ENCODE measurements at regions of chr16 and their contacts with region 1.

Region 1: GRCh38 chr16:78353610-78354275 is 254.3 kb downstream of the WWOX start:
- DNase-seq: no peak
- ATAC-seq: no peak

Region 2: DNA sequence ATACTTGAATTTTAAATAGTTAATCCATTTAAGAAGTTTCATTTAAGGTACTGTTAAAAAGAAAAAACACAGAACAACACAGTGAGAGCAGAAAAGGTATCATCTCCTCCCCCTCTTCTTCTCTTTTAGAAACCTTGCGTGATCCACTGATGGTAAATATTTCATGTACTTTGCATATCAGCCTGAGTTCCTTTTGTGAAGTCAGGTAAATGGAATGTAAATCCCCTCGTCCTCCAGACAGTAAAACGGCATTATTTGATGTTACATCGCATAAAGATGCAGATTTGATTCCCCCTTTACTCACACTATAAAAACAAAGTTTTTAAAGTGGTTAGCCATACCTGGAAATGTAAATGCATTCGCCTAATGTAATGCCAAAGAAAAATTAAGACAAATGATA is 19.9 kb before region 1 on chr16:
- intact Hi-C with region 1: loop called in 1 of 2 experiments (anchors 1 kb)
- DNase-seq: no peak
- ATAC-seq: no peak

Region 3: GRCh38 chr16:78503602-78504001 is 149.9 kb after region 1 on chr16:
- intact Hi-C with region 1: no loop called
- DNase-seq: no peak
- ATAC-seq: no peak

Region 4: GRCh38 chr16:78538919-78539318 is 185.2 kb after region 1 on chr16:
- intact Hi-C with region 1: no loop called
- DNase-seq: no peak
- ATAC-seq: no peak

Measured in left cardiac atrium (tissue), 4 donors.